SK-N-SH (cell line): ENCODE measurements at regions of chr16 and their contacts with region 1.

Region 1: DNA sequence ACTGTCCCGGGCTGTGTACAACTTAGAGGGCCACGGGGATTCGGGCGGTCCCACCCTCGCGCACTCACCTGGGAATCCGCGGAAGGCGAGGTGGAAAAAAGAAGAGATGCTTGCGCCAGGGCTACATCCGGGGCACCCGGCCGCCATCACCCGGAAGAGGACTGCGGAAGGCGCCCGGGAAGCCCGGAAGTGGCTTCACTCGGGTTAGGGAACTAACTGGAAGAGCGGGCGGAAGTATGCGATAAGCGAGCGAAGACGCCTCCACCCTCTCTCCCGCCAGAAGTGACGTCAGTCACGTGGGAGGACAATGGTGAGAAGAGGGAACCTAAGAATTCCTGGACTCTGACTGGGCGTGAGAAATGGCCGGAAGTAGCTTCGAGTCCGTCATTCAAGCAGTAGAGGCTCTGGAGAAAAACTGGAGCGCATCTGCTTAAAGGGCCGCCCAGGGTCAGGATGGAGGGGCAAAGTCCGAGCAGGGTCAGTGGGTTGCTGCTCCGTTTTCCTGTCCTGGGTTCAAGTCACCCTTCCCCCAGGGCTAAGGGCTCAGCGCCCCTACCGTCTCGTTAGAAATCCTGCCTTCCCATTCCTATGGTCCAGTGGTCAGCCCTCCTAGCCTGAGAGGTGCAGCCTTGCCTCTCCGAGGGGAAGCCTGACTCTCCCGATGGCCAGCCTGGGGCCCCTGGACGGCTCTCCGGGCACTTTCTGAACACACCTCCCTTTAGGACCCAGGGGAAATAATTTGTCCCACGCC is at the start of gene CD2BP2:
- DNase-seq: peak; percentile 96
- H3K4me3 ChIP-seq: peak within 1 kb of the TSS; percentile 93 to 99
- H3K27ac ChIP-seq: peak within 1 kb of the TSS; percentile 95 to 99
- H3K4me1 ChIP-seq: peaks cover 34 to 39% of the 10 kb centered on the region in 2 experiments
- H3K27me3 ChIP-seq: no peaks in the 10 kb centered on the region
- CTCF ChIP-seq: no peak
- EP300 ChIP-seq: 0 out of 4 replicates have a peak, but pooled peaks of 1 of the 2 experiments have one; percentile 4
- RAD21 ChIP-seq: no peak; the same call in 1 of the 2 replicates
- polyA plus RNA-seq, gene CD2BP2: 80.8 and 85.3 TPM in 2 replicates

Region 2: GRCh38 chr16:30335598-30336474 is 19.5 kb before region 1 on chr16:
- CTCF ChIA-PET with region 1: interaction called, 7 read pairs
- POLR2A ChIA-PET with region 1: interaction called, 18 read pairs
- DNase-seq: no peak
- H3K4me3 ChIP-seq: peak overlapping the region; percentile 74 to 79
- H3K27ac ChIP-seq: peak overlapping the region; percentile 1 to 76; a peak in 2 of 4 replicates
- H3K4me1 ChIP-seq: peaks cover 0 to 5% of the 10 kb centered on the region in 2 experiments; a peak in 1 of 4 replicates
- H3K27me3 ChIP-seq: no peaks in the 10 kb centered on the region
- CTCF ChIP-seq: no peak
- EP300 ChIP-seq: no peak
- RAD21 ChIP-seq: no peak

Region 3: DNA sequence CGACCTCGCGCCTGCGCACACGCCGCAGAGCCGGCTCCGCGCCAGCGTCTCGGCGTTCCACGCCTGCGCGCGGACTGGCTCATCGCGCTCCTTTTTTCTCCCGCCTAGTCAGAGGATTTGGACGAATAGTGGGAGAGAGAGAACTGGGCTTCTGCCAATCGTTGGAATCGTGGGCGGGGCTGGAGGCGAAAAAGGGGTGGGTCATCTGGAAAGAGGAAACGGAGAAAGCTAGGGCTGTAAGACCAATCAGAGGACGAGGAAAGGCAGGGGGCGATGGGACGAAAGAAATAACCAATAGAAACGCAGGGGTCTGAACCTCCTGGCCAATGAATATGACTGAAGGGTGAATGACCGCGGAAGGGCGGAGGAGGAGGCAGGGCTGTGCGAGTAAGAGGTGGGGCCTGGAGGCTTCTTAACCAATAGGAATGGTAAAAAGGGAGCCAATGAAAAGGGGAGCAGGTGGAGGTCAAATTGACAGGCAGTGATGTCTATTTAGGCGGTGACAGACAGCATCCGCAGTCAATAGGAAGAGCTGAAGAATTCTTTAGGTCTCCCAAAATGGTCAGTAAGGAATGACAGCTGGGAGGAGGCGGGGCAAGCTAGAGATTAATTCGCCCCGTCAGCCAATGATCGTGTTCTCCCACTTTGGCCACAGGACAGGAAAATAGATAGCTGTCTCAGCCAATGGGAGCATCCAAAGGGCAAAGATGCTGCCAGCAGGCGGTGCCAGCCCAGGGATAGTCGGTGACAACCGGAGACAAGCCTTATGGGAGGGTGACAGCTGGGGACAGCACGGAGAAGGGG is 15.3 kb after region 1 on chr16 and contains the start of gene TBC1D10B:
- CTCF ChIA-PET with region 1: interaction called, 19 read pairs
- POLR2A ChIA-PET with region 1: interaction called, 19 read pairs
- DNase-seq: peak; percentile 93
- H3K4me3 ChIP-seq: peak within 1 kb of the TSS; percentile 74 to 87
- H3K27ac ChIP-seq: peak within 1 kb of the TSS; percentile 57 to 91; a peak in 3 of 4 replicates
- H3K4me1 ChIP-seq: peaks cover 4 to 37% of the 10 kb centered on the region in 2 experiments; a peak in 3 of 4 replicates
- H3K27me3 ChIP-seq: no peaks in the 10 kb centered on the region
- CTCF ChIP-seq: peak; percentile 27; the same call in 1 of the 2 replicates
- EP300 ChIP-seq: no peak
- RAD21 ChIP-seq: 0 out of 2 replicates have a peak, but pooled peaks have one; percentile 22
- polyA plus RNA-seq, gene TBC1D10B: 15.7 and 20.5 TPM in 2 replicates